HCT116 (cell line): ENCODE measurements at regions of chr7 and their contacts with region 1.

Region 1: DNA sequence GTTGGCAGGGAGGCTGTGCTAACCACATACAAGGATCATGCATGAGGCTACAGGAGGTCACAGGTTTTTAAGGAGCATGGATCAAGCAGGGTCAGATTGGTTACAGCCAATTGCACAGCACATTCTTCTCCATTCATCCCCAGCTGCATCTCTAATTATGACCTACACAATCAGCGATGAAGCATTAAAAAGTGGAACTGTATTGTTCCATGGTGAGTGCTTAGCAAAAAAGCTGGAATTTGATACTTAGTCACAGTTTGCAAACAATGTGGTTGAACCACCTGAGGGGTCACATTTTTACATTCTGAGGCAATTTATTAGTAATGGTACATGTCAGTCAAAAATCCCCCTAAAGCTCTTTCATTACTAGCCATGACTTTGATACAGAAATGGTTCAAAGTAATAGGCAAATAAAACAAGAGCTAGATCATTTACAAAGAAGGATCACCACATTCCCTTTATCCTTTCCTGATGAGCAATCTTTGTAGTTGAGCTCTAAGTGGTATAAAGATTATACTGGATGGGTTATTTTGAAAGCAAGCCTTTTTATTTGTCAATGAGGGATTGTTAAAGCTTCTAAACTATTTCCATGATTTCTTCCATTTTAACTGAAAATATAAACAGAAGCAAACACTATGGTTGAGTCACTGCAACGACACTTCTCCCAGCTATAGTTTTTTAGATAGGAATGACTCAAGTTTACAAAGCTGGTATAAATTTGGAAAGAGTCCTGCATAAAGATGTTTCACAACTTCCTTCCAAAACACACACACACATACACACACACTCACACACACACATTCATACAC is 217.8 kb upstream of the SEMA3A start:
- DNase-seq: peak; percentile 83
- ATAC-seq: peak; percentile 92
- H3K4me3 ChIP-seq: no peak overlapping the region; a peak in 1 of 4 replicates
- H3K27ac ChIP-seq: peak overlapping the region; percentile 73; the same call in 1 of the 2 replicates
- H3K4me1 ChIP-seq: peaks cover 11 to 28% of the 10 kb centered on the region in 2 experiments
- H3K27me3 ChIP-seq: no peaks in the 10 kb centered on the region
- CTCF ChIP-seq: no peak
- POLR2A ChIP-seq: no peak
- RAD21 ChIP-seq: peak; percentile 28; the same call in 1 of the 2 replicates

Region 2: GRCh38 chr7:84364708-84365107 is 47.7 kb before region 1 on chr7:
- CTCF ChIA-PET with region 1: no interaction called
- POLR2A ChIA-PET with region 1: no interaction called
- RAD21 ChIA-PET with region 1: no interaction called
- intact Hi-C with region 1: loop called (anchors 5 kb)
- DNase-seq: no peak
- ATAC-seq: no peak
- H3K4me3 ChIP-seq: no peak overlapping the region
- H3K27ac ChIP-seq: no peak overlapping the region
- H3K4me1 ChIP-seq: peaks cover 0 to 6% of the 10 kb centered on the region in 2 experiments; a peak in 2 of 4 replicates
- H3K27me3 ChIP-seq: no peaks in the 10 kb centered on the region
- CTCF ChIP-seq: no peak
- POLR2A ChIP-seq: no peak
- RAD21 ChIP-seq: no peak

Region 3: DNA sequence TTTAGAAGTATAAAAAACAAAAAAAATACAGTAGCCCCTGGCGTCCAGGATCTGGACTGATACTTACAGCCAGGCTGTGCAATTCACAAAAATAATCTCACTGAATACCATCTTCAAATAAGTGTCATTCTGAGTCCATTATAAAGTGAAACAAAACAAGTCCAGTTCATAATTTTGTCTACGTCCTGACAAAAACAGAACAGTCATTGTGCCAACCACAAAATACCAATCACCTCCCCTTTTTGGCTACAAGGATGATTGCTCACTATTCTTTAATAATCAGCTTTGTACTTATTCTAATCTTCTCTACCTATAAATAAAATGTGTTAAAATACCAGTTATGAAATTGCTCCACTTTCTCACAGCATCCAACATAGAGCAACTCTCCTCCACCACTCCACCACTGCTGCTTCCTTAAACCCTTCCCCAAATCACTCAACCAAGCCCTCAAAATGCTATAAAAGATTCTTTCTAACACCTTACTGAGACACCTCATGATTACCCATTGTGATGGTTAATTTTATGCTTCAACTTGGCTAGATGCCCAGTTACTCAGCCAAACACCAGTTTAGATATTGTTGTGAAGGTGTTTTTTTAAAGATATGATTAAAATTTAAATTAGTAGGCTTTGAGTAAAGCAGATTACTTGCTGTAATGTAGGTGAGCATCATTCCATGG is 262.0 kb after region 1 on chr7:
- CTCF ChIA-PET with region 1: no interaction called
- POLR2A ChIA-PET with region 1: no interaction called
- RAD21 ChIA-PET with region 1: no interaction called
- intact Hi-C with region 1: no loop called
- DNase-seq: no peak
- ATAC-seq: no peak
- H3K4me3 ChIP-seq: no peak overlapping the region
- H3K27ac ChIP-seq: no peak overlapping the region
- H3K4me1 ChIP-seq: peaks cover 3% of the 10 kb centered on the region in 2 experiments; a peak in 1 of 4 replicates
- H3K27me3 ChIP-seq: no peaks in the 10 kb centered on the region
- CTCF ChIP-seq: no peak
- POLR2A ChIP-seq: no peak
- RAD21 ChIP-seq: no peak